Heart right ventricle (tissue), 16 donors: ENCODE measurements at regions of chr6 and their contacts with region 1.

Region 1: DNA sequence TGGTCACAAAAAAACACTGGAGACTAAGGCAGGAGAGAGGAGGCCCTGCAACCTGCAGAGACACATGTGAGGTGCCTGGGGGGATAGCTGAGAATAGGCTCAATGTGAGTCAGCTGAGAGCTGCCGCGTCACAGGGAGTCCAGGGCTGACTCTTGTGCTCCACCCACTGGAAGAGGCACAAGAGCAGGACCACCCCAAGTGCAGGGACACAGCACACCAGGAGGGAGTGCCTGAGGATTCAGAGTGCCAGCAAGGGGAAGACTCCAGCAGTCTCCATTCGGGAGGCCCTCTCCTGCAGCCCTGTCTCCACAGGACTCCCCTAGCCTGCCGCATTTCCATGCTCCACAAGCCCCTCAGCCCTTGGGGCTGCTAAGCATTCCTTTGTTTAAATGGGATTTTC is 105.5 kb downstream of the HUS1B start:
- DNase-seq: no peak
- ATAC-seq: peak in 4 of 8 donors; percentile 37 to 67 (median 56)
- H3K4me3 ChIP-seq: no peak overlapping the region
- H3K27ac ChIP-seq: no peak overlapping the region
- H3K4me1 ChIP-seq: no peaks in the 10 kb centered on the region
- H3K27me3 ChIP-seq: no peaks in the 10 kb centered on the region
- CTCF ChIP-seq: peak in 2 of 9 donors; percentile 16 to 24

Region 2: DNA sequence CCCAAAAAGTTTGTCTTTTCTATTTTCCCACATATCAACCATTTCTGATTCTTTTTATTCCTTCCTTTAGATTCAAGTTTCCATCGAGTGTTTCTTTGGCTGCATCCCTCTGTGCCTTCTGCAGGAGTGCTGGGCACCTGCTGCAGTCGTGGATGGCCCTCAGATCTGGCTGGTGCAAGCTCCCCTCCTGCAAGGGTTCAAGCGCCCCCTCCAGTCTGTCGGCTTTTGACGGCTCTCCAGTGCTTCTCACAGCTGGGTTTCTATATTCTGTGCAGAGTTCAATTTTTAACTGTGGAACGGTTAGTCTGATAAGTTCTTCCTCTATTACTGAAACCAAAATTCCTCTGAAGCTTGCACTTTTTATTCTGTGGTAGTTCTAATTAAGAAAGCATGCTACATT is 26.6 kb before region 1 on chr6:
- intact Hi-C with region 1: loop called in 1 of 10 experiments (anchors 1 kb)
- DNase-seq: no peak
- ATAC-seq: no peak
- H3K4me3 ChIP-seq: no peak overlapping the region
- H3K27ac ChIP-seq: no peak overlapping the region
- H3K4me1 ChIP-seq: no peaks in the 10 kb centered on the region
- H3K27me3 ChIP-seq: no peaks in the 10 kb centered on the region
- CTCF ChIP-seq: no peak

Region 3: GRCh38 chr6:624979-625378 is 73.6 kb after region 1 on chr6:
- intact Hi-C with region 1: no loop called
- DNase-seq: no peak
- ATAC-seq: peak in 7 of 8 donors; percentile 20 to 87 (median 65)
- H3K4me3 ChIP-seq: no peak overlapping the region
- H3K27ac ChIP-seq: no peak overlapping the region
- H3K4me1 ChIP-seq: no peaks in the 10 kb centered on the region
- H3K27me3 ChIP-seq: no peaks in the 10 kb centered on the region
- CTCF ChIP-seq: peak in 4 of 9 donors; percentile 46 to 52 (median 48)

Region 4: GRCh38 chr6:747028-747427 is 195.6 kb after region 1 on chr6:
- intact Hi-C with region 1: no loop called
- DNase-seq: no peak
- ATAC-seq: no peak
- H3K4me3 ChIP-seq: no peak overlapping the region
- H3K27ac ChIP-seq: no peak overlapping the region
- H3K4me1 ChIP-seq: no peaks in the 10 kb centered on the region
- H3K27me3 ChIP-seq: peaks cover 0 to 5% (median 0%) of the 10 kb centered on the region in 7 donors
- CTCF ChIP-seq: no peak

Region 5: DNA sequence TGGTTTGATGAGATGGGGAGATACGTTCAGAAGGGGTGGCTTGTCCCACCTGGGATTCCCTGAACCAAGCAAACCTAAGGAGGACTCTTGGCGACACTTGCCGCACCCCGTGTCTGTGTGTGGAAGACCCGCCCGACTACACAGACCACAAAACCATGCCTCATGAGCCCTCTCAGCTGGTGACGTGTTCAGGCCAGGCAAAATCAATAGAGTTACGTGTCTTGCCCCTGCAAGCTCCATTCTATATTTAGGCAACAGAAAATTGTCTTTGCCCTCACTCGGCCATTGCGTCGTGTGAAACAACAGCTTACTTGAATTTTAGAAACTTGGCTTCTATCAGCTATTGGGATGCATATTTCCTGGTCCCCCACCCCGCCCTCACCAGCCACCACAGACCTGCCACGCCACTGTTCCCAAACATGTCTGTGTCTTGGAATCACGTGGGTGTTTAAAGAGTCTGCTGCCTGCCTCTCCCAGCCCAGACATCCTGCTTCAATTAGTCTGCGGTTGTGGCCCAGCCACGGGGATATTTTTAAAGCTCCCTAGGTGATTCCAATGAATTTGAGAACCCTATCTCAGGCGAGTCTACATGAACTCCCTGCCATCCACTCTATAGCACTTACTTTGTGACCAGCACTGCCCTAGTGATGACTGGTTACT is 420.7 kb after region 1 on chr6:
- intact Hi-C with region 1: no loop called
- DNase-seq: no peak
- ATAC-seq: no peak
- H3K4me3 ChIP-seq: no peak overlapping the region
- H3K27ac ChIP-seq: no peak overlapping the region
- H3K4me1 ChIP-seq: no peaks in the 10 kb centered on the region
- H3K27me3 ChIP-seq: peaks cover 0 to 30% (median 8%) of the 10 kb centered on the region in 7 donors
- CTCF ChIP-seq: no peak